Endothelial cell of umbilical vein (primary cell): ENCODE measurements at regions of chr17 and their contacts with region 1.

Region 1: DNA sequence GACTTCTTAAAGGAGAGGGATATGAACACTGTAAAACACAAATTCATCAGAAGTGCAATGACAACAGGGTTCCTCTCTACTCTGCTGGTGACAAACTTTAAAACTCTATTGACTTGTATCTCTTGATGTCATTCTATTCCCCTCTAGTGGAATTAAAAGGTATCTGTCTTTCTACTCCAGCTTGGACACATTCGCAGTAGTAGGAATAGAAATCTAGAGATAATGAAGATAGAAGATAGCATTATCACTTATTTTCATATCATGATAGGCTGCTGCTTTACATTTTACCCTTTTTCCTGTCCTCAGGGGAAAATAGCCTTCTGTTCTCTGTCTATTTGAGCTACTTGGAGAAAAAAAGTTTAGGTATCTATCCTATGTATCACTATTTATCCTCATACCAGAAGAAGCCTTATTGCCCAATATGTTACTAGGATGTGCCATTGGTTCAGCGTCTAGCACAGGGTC is 209.6 kb upstream of the CACNG5 start:
- DNase-seq: peak; percentile 55
- H3K4me3 ChIP-seq: no peak overlapping the region
- H3K27ac ChIP-seq: no peak overlapping the region
- H3K4me1 ChIP-seq: no peaks in the 10 kb centered on the region
- H3K27me3 ChIP-seq: no peaks in the 10 kb centered on the region
- CTCF ChIP-seq: peak; percentile 23 to 39
- POLR2A ChIP-seq: no peak

Region 2: GRCh38 chr17:66200685-66201092 is 424.7 kb before region 1 on chr17:
- CTCF ChIA-PET with region 1: interaction called, 14 read pairs
- POLR2A ChIA-PET with region 1: no interaction called
- dilution Hi-C with region 1: no loop called
- intact Hi-C with region 1: loop called (anchors 1 kb)
- DNase-seq: peak; percentile 79
- H3K4me3 ChIP-seq: no peak overlapping the region
- H3K27ac ChIP-seq: no peak overlapping the region
- H3K4me1 ChIP-seq: no peaks in the 10 kb centered on the region
- H3K27me3 ChIP-seq: no peaks in the 10 kb centered on the region
- CTCF ChIP-seq: peak; percentile 67 to 70
- POLR2A ChIP-seq: no peak

Region 3: GRCh38 chr17:66290101-66290722 is 335.1 kb before region 1 on chr17:
- CTCF ChIA-PET with region 1: interaction called, 4 read pairs
- POLR2A ChIA-PET with region 1: no interaction called
- dilution Hi-C with region 1: no loop called
- intact Hi-C with region 1: loop called (anchors 1 kb)
- DNase-seq: peak; percentile 15
- H3K4me3 ChIP-seq: no peak overlapping the region
- H3K27ac ChIP-seq: no peak overlapping the region
- H3K4me1 ChIP-seq: no peaks in the 10 kb centered on the region
- H3K27me3 ChIP-seq: no peaks in the 10 kb centered on the region
- CTCF ChIP-seq: no peak
- POLR2A ChIP-seq: no peak

Region 4: GRCh38 chr17:66514227-66514806 is 111.0 kb before region 1 on chr17:
- CTCF ChIA-PET with region 1: no interaction called
- POLR2A ChIA-PET with region 1: no interaction called
- dilution Hi-C with region 1: no loop called
- intact Hi-C with region 1: no loop called
- DNase-seq: no peak
- H3K4me3 ChIP-seq: no peak overlapping the region
- H3K27ac ChIP-seq: no peak overlapping the region
- H3K4me1 ChIP-seq: peaks cover 8% of the 10 kb centered on the region
- H3K27me3 ChIP-seq: no peaks in the 10 kb centered on the region
- CTCF ChIP-seq: no peak
- POLR2A ChIP-seq: no peak